SK-N-SH (cell line): ENCODE measurements at regions of chr2 and their contacts with region 1.

Region 1: DNA sequence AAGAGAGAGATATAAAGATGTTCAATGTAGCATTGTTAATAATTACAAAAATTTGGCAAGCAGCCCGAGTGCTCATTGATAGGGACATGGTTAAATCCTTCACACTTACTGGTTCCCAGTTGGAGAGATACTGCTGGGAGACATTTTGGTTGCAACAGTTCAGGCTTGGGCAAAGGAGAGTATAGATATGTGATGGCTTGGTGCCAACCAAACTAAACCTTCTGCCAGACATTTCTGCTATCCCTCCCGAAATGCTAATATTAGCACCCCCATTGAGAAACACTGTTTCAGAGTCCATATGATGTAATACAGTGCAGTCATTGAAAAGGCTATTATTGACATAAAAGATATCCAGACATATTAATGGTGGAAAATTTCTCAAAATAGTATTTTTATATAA is 11.5 kb downstream of the GEN1 start:
- DNase-seq: no peak
- H3K4me3 ChIP-seq: no peak overlapping the region
- H3K27ac ChIP-seq: no peak overlapping the region
- H3K4me1 ChIP-seq: no peaks in the 10 kb centered on the region; a peak in 1 of 4 replicates
- H3K27me3 ChIP-seq: no peaks in the 10 kb centered on the region
- CTCF ChIP-seq: no peak
- EP300 ChIP-seq: no peak
- RAD21 ChIP-seq: no peak

Region 2: GRCh38 chr2:17538844-17539554 is 226.4 kb before region 1 on chr2:
- CTCF ChIA-PET with region 1: no interaction called
- POLR2A ChIA-PET with region 1: no interaction called
- DNase-seq: peak; percentile 87
- H3K4me3 ChIP-seq: peak overlapping the region; percentile 62 to 74
- H3K27ac ChIP-seq: peak overlapping the region; percentile 22 to 47; a peak in 3 of 4 replicates
- H3K4me1 ChIP-seq: peaks cover 0 to 25% of the 10 kb centered on the region in 2 experiments; a peak in 2 of 4 replicates
- H3K27me3 ChIP-seq: peaks cover 19% of the 10 kb centered on the region; the same call in 1 of the 2 replicates
- CTCF ChIP-seq: no peak
- EP300 ChIP-seq: no peak; a peak in 1 of 4 replicates
- RAD21 ChIP-seq: no peak

Region 3: DNA sequence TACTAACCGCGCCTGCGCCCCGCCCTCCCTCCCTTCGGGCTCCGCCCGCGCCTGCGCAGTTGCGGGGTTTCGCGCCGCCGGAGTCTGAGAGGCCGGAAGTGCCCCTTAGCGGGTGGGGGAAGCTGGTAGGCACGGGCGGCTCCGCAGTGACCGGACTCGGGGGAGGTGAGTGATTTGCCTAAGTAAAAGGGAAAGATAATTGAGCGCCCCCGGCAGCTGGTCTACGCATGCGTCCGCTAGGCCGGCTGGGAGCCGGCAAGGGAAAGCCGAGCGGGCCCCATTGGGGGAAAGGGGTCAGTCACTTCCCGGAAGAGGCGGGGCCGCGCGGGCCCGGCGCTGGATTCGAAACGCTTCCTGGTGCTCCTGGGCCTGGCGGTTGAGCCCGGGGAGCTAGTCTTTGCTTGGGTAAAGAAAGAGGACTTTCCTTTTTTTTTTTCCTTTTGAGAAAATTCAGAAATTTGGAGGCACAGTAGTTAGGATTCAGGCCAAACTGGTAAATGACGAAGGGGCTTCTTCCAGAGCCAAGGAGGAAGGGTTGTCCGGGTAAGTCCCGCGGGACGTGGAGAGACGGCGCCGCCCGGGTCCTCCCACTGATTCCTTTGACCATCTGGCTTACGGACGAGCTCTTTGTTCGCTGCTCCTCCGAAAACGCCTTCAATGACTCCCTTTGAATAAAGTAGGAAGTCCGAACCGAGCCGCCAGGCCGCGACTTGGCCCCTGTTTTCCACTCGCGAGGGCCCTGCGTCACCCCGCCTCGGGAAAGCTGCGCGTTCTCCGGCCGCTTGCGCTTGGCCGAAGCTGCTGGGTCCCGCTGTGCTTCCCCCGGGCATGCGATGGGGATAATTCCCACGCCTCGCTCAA is 11.4 kb before region 1 on chr2 and contains the starts of genes GEN1 and SMC6:
- CTCF ChIA-PET with region 1: interaction called, 10 read pairs
- POLR2A ChIA-PET with region 1: interaction called, 4 read pairs
- DNase-seq: peak; percentile 99
- H3K4me3 ChIP-seq: peak within 1 kb of the TSS; percentile 84 to 99
- H3K27ac ChIP-seq: peak within 1 kb of the TSS; percentile 98 to 100
- H3K4me1 ChIP-seq: peaks cover 25 to 40% of the 10 kb centered on the region in 2 experiments
- H3K27me3 ChIP-seq: no peaks in the 10 kb centered on the region
- CTCF ChIP-seq: no peak
- EP300 ChIP-seq: no peak; a peak in 1 of 4 replicates
- RAD21 ChIP-seq: no peak
- polyA plus RNA-seq, gene GEN1: 5.3 and 7.8 TPM in 2 replicates
- polyA plus RNA-seq, gene SMC6: 6.5 and 8.2 TPM in 2 replicates